Aorta (tissue), 5 donors: ENCODE measurements at regions of chr11 and their contacts with region 1.

Region 1: GRCh38 chr11:1893581-1894359 is 2.1 kb upstream of the PRR33 start:
- DNase-seq: no peak
- ATAC-seq: no peak
- H3K4me3 ChIP-seq: no peak overlapping the region
- H3K27ac ChIP-seq: no peak overlapping the region
- H3K4me1 ChIP-seq: no peaks in the 10 kb centered on the region
- H3K27me3 ChIP-seq: no peaks in the 10 kb centered on the region

Region 2: DNA sequence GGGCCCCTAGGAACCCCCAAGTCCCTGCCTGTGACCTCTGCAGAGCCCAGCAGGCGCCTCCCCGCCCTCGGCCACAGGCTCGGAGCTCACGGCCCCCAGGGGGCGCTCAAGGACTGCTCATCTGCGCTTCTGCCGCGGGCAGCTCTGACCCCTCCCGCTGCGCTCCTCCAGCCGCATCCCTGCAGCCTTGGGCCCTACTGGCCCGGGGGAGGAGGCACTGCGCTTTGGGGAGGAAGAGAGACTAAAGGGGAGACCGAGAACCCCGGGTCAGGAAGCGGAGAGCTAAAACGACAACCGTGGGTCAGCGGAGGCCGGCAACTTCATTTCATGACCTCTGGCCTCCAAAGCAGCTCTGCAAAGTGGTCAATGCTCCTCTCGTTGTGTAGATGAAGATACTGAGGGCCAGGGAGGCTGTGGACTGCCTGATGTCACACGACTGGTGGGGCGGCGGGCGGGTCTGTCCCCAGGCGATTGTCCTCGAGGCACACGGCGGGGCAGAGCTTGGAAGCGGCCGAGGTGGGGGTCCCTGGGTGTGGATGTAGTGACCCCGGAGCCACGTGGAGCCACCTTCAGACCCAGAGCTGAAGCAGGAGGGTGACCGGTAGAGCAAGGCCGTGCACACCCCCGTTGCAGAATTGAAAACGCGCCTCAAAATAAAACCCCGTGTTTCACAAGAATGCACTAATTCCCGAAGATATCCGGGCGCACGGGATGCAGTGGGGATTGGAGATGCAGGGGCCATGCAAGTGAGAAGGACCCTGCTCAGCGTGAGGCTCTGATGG is 199.5 kb before region 1 on chr11:
- intact Hi-C with region 1: no loop called
- DNase-seq: peak; percentile 92 to 98
- ATAC-seq: peak; percentile 97
- H3K4me3 ChIP-seq: no peak overlapping the region
- H3K27ac ChIP-seq: no peak overlapping the region
- H3K4me1 ChIP-seq: no peaks in the 10 kb centered on the region
- H3K27me3 ChIP-seq: no peaks in the 10 kb centered on the region

Region 3: DNA sequence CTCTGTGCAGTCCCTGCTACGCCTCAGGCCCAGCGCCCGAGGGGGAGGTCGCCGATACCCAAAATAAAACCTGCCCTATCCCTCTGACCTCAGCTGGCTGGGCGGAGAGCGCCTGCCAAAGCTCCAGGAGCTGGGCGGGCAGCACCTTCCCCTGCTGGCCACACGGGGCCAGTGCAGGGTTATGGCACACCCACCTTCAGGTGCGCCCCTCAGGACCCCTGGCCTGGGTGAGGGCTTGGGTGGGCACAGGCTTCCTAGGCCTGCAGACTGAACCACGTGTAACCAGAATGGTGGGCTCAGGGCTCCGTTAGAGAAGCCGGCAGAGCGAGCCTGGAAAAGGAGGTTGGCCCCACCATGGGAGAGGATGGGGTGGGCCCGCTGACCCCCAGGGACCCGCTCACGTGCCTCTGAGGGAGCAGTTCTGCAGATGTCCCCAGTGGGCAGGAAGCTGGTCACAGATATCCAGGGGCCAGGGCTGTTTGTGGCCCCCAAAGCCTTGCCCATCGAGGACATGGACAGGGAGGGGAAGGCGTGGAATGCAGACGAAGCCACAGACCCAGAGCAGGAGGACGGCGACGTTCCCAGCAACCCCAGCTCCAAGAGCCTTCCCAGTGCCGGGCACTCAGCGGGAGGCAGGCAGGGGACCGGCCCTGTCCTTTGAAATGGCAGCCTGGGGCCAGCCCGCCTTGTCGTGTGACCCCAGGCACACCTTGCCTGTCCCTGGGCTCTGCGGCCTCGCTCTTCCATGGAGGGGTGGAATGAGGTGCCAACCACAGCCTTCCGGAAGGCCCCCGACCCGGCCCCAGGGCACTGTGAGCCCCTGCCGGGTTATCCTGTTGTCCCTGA is 24.1 kb after region 1 on chr11:
- intact Hi-C with region 1: loop called (anchors 1 kb)
- DNase-seq: peak; percentile 53 to 70
- ATAC-seq: no peak
- H3K4me3 ChIP-seq: no peak overlapping the region
- H3K27ac ChIP-seq: no peak overlapping the region
- H3K4me1 ChIP-seq: no peaks in the 10 kb centered on the region
- H3K27me3 ChIP-seq: no peaks in the 10 kb centered on the region

Region 4: GRCh38 chr11:1943977-1944376 is 50.2 kb after region 1 on chr11:
- intact Hi-C with region 1: loop called (anchors 1 kb)
- DNase-seq: peak; percentile 43 to 54
- ATAC-seq: no peak
- H3K4me3 ChIP-seq: no peak overlapping the region
- H3K27ac ChIP-seq: no peak overlapping the region
- H3K4me1 ChIP-seq: no peaks in the 10 kb centered on the region
- H3K27me3 ChIP-seq: no peaks in the 10 kb centered on the region